AG04449 (cell line): ENCODE measurements at regions of chr7 and their contacts with region 1.

Region 1: GRCh38 chr7:151110941-151111645 is 24.8 kb downstream of the AGAP3 start:
- DNase-seq: no peak
- H3K4me3 ChIP-seq: no peak overlapping the region
- CTCF ChIP-seq: peak; percentile 94

Region 2: GRCh38 chr7:150898475-150899011 is 212.6 kb before region 1 on chr7:
- CTCF ChIA-PET with region 1: interaction called, 34 read pairs
- POLR2A ChIA-PET with region 1: no interaction called
- DNase-seq: no peak
- H3K4me3 ChIP-seq: no peak overlapping the region
- CTCF ChIP-seq: peak; percentile 95

Region 3: GRCh38 chr7:150974468-150975391 is 136.4 kb before region 1 on chr7:
- CTCF ChIA-PET with region 1: interaction called, 12 read pairs
- POLR2A ChIA-PET with region 1: no interaction called
- DNase-seq: no peak
- H3K4me3 ChIP-seq: peak overlapping the region; percentile 34
- CTCF ChIP-seq: peak; percentile 17

Region 4: GRCh38 chr7:151008511-151009323 is 102.4 kb before region 1 on chr7:
- CTCF ChIA-PET with region 1: interaction called, 190 read pairs
- POLR2A ChIA-PET with region 1: no interaction called
- DNase-seq: no peak
- H3K4me3 ChIP-seq: peak overlapping the region; percentile 18
- CTCF ChIP-seq: peak; percentile 68

Region 5: DNA sequence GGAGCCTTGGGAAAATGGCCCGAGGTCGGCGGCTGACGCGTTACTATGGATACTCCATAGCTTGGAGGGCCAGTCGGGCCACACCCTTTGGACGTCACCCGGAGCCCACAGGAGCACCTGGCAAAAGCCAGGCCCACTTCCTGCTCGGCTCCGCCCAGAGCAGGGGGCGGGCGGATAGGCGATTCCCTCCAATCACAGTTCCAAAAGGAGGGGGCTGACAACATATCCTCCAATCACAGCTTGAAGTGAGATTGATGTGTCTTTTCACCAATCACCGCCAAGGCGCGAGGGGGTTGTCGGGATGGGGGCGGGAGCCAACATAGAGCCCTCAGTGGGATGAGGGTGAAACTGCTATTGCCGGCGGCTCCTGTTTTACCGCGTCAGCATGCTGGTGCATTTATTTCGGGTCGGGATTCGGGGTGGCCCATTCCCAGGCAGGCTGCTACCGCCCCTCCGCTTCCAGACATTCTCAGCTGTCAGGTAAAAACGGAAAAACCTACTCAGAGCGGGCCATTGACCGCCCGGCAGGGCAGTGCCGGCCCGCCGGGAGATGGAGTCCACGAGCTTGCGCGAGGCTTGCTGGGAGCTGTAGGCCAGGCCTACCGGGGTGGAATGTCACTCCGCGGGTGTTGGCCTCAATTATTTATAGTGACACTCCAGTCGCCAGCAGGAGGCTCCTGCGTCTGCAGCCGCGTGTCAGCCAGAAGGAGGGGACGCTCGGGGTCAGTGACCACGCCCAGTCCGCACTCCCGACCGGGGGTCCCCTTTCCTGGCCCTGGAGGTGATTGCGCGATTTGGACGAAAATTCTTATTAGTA is 82.8 kb before region 1 on chr7 and contains the start of gene ABCB8:
- CTCF ChIA-PET with region 1: interaction called, 125 read pairs
- POLR2A ChIA-PET with region 1: interaction called, 5 read pairs
- DNase-seq: peak; percentile 90
- H3K4me3 ChIP-seq: peak within 1 kb of the TSS; percentile 83
- CTCF ChIP-seq: peak; percentile 42

Region 6: GRCh38 chr7:151057989-151058780 is 52.9 kb before region 1 on chr7:
- CTCF ChIA-PET with region 1: interaction called, 48 read pairs
- POLR2A ChIA-PET with region 1: no interaction called
- DNase-seq: peak; percentile 98
- H3K4me3 ChIP-seq: peak overlapping the region; percentile 73
- CTCF ChIP-seq: no peak

Region 7: GRCh38 chr7:151080522-151081169 is 30.4 kb before region 1 on chr7 and contains the start of gene FASTK:
- CTCF ChIA-PET with region 1: interaction called, 347 read pairs
- POLR2A ChIA-PET with region 1: interaction called, 3 read pairs
- DNase-seq: peak; percentile 31
- H3K4me3 ChIP-seq: peak within 1 kb of the TSS; percentile 87
- CTCF ChIP-seq: no peak